ENCODE measurements at regions of chr4 and their contacts with region 1.

Region 1: DNA sequence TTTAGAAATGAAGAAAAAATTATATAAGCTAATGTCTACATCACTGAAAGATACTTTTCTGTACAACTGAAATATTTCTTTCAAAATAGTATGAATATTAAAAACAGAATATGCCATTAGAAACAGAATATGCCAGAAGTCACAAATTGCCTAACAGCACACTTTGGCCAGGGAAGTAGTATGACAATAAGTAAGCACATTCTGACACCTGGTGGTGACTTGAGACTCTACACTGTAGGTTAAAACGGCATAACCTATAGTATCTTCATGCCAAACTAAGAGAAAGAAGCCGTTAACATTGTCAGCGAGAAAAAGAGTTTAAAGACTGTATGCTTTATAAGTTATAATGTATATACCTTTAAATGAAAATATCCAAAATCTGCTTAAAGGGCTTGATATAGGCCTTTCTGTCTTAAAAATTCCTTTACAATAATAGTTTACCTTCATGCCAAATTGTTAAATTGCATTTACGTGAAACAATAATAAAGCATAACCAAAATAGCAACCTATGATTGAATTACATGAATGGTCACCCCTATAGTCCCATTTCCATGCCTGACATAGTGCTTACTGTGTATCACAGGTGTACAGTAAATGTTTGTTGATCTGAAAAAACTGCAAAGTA is 32.8 kb downstream of the FAM13A start:
- DNase-seq: peak; percentile 75
- ATAC-seq: peak; percentile 73
- H3K4me3 ChIP-seq: no peak overlapping the region
- H3K4me3 Mint-ChIP-seq: no peak overlapping the region
- H3K27ac ChIP-seq: no peak overlapping the region
- H3K27ac Mint-ChIP-seq: no peak overlapping the region
- H3K4me1 ChIP-seq: no peaks in the 10 kb centered on the region
- H3K4me1 Mint-ChIP-seq: no peaks in the 10 kb centered on the region
- H3K27me3 ChIP-seq: no peaks in the 10 kb centered on the region
- H3K27me3 Mint-ChIP-seq: peaks cover 3% of the 10 kb centered on the region
- CTCF ChIP-seq: peak; percentile 90

Region 2: DNA sequence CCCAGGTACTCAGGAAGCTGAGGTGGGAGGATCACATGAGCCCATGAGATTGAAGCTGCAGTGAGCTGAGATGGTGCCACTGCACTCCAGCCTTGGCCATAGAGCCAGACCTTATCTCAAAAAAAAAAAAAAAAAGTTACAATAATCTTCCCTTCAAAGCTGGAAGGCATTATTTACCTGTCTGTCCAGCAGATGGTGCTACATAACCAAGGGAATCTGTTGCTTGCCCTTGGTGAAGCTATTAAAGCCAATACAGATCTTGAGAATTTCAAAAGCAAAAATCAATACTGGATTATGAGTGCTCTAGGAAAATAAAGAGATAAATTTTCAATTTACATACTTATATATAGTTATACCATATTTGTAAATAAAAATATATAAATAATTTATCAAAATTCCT is 990.9 kb before region 1 on chr4:
- CTCF ChIA-PET with region 1: interaction called, 7 read pairs
- POLR2A ChIA-PET with region 1: no interaction called
- intact Hi-C with region 1: loop called (anchors 5 kb)
- DNase-seq: peak; percentile 64
- ATAC-seq: peak; percentile 43
- H3K4me3 ChIP-seq: no peak overlapping the region
- H3K4me3 Mint-ChIP-seq: no peak overlapping the region
- H3K27ac ChIP-seq: no peak overlapping the region
- H3K27ac Mint-ChIP-seq: no peak overlapping the region
- H3K4me1 ChIP-seq: no peaks in the 10 kb centered on the region
- H3K4me1 Mint-ChIP-seq: no peaks in the 10 kb centered on the region
- H3K27me3 ChIP-seq: no peaks in the 10 kb centered on the region
- H3K27me3 Mint-ChIP-seq: no peaks in the 10 kb centered on the region
- CTCF ChIP-seq: peak; percentile 71

Region 3: DNA sequence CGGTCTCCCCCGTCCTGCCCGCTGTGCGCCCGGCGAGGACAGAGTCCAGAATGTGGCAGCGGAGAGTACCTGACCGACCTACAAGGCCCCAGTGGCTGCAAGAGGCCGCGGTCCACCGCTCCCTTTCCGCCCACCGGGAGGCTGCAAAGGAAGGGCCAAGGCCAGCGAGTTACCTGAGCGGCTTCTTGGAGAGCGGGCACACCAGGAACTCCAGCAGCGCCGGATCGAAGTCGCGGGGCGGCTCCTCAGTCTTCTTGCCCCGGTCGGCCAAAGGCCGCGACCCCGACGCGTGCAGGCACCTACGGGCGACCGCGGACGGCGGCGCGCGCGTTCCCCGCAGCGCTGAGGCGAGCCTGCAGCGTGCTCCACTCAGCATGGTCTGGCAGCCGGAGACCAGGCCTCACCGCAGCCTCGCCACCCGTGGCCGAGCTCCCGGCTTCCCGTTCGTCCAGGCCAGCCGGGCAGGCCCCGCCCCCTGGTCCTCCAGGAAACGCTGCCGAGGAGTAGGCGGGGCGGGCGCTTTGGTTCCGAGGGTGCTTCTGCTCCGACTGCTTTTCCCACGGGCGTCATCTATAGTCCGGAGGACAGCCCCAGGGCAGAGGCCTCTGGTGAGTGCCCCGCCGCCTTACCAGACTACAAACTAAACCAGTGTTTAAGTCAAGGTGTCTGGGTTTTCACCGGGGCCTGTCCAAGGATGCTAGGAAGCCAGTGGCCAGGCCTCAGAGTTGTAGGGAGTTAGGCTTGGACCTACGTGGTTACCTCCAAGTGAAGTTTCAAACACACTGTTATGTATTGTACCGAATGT is 500.6 kb before region 1 on chr4 and contains the start of gene PYURF:
- CTCF ChIA-PET with region 1: interaction called, 54 read pairs
- POLR2A ChIA-PET with region 1: no interaction called
- intact Hi-C with region 1: loop called (anchors 1 kb)
- DNase-seq: peak; percentile 82
- ATAC-seq: peak; percentile 92
- H3K4me3 ChIP-seq: peak within 1 kb of the TSS; percentile 66 to 88 (median 68)
- H3K4me3 Mint-ChIP-seq: peak within 1 kb of the TSS; percentile 90
- H3K27ac ChIP-seq: peak within 1 kb of the TSS; percentile 28 to 70
- H3K27ac Mint-ChIP-seq: peak within 1 kb of the TSS; percentile 87
- H3K4me1 ChIP-seq: peaks cover 12 to 18% of the 10 kb centered on the region in 2 donors
- H3K4me1 Mint-ChIP-seq: peaks cover 20% of the 10 kb centered on the region
- H3K27me3 ChIP-seq: no peaks in the 10 kb centered on the region
- H3K27me3 Mint-ChIP-seq: no peaks in the 10 kb centered on the region
- CTCF ChIP-seq: no peak
- total RNA-seq, gene PYURF: 38.1 and 40.5 TPM in 2 replicates

Region 4: DNA sequence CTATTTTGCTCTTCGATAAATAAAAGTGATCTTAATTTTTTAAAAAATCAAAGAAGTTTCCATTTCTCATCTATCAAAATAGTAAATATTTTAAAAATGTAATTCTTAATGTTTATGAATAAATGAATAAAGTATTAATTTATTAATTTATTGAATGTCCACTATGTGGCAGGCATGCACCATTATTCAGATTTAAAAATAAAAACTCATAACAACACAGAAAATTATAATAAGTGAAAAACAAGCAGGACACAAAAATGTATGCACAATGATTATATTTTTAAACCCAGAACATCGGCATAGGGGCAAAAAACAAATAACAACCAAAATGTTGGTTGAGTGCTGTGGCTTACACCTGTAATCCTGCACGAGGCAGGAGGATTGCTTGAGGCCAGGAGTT is 495.3 kb before region 1 on chr4:
- CTCF ChIA-PET with region 1: interaction called, 54 read pairs
- POLR2A ChIA-PET with region 1: no interaction called
- intact Hi-C with region 1: loop called (anchors 1 kb)
- DNase-seq: no peak
- ATAC-seq: no peak
- H3K4me3 ChIP-seq: no peak overlapping the region
- H3K4me3 Mint-ChIP-seq: no peak overlapping the region
- H3K27ac ChIP-seq: no peak overlapping the region
- H3K27ac Mint-ChIP-seq: no peak overlapping the region
- H3K4me1 ChIP-seq: peaks cover 4 to 8% of the 10 kb centered on the region in 2 donors
- H3K4me1 Mint-ChIP-seq: peaks cover 7% of the 10 kb centered on the region
- H3K27me3 ChIP-seq: no peaks in the 10 kb centered on the region
- H3K27me3 Mint-ChIP-seq: no peaks in the 10 kb centered on the region
- CTCF ChIP-seq: no peak

Region 5: DNA sequence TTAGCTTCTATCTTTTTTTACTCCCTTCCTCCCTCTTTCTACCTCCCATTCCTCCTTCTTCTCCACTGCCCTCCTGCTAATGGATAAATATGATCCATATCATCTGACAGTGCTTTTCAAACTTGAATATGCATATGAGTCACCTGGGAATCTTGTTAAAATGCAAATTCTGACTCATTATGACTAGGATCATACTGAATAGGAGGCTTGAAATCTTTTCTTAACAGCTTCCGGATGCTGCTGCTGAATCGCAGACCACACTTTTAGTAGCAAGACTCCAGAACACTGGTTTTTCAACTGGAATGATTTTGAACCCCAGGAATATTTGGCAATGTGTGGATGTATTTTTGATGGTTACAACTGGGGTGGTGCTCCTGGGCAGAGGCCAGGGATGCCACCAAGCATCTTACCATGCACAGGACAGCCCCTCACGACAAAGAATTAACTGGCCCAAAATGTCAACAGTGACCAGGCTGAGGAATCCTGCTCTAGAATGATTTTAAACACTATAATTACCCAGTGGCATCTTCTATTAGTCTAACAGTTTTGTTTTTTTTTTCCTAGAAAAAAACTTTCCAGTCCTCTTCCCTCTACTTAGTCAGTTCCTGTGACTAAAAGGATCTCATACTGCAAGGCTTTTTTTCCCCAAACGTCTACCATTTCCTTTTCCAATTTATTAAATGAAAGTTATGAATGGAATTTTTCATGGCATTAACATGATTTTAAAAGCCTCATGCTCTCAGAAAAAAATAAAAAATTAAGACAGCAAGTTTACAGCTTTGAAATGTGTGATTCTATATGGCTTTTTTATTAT is 490.0 kb before region 1 on chr4:
- CTCF ChIA-PET with region 1: interaction called, 89 read pairs
- POLR2A ChIA-PET with region 1: no interaction called
- intact Hi-C with region 1: loop called (anchors 1 kb)
- DNase-seq: no peak
- ATAC-seq: no peak
- H3K4me3 ChIP-seq: no peak overlapping the region
- H3K4me3 Mint-ChIP-seq: no peak overlapping the region
- H3K27ac ChIP-seq: no peak overlapping the region
- H3K27ac Mint-ChIP-seq: no peak overlapping the region
- H3K4me1 ChIP-seq: peaks cover 0 to under 1% of the 10 kb centered on the region in 2 donors
- H3K4me1 Mint-ChIP-seq: no peaks in the 10 kb centered on the region
- H3K27me3 ChIP-seq: no peaks in the 10 kb centered on the region
- H3K27me3 Mint-ChIP-seq: peaks cover 7% of the 10 kb centered on the region
- CTCF ChIP-seq: no peak

Region 6: DNA sequence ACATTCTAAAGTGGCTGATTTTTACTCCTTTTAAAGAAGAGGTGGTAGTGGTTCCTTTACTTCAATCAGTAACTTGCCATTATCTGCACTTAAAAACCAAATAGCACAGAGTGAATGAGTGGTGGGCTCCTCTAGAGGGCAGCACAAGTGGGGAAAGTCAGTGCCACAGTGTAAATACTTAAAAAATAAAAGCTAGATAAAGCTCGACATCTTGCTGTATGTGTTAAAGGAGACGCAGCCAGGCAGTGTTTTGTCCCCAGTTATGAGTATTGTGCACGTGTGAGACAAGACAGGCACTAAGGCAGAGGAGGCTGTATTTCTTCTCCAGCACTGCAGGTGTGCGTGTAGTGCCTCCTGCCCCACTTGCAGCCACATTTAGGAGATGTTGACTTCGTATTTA is 351.2 kb before region 1 on chr4:
- CTCF ChIA-PET with region 1: interaction called, 10 read pairs
- POLR2A ChIA-PET with region 1: no interaction called
- intact Hi-C with region 1: loop called (anchors 5 kb)
- DNase-seq: peak; percentile 5
- ATAC-seq: no peak
- H3K4me3 ChIP-seq: no peak overlapping the region
- H3K4me3 Mint-ChIP-seq: no peak overlapping the region
- H3K27ac ChIP-seq: no peak overlapping the region
- H3K27ac Mint-ChIP-seq: no peak overlapping the region
- H3K4me1 ChIP-seq: no peaks in the 10 kb centered on the region
- H3K4me1 Mint-ChIP-seq: no peaks in the 10 kb centered on the region
- H3K27me3 ChIP-seq: no peaks in the 10 kb centered on the region
- H3K27me3 Mint-ChIP-seq: no peaks in the 10 kb centered on the region
- CTCF ChIP-seq: peak; percentile 35

Region 7: DNA sequence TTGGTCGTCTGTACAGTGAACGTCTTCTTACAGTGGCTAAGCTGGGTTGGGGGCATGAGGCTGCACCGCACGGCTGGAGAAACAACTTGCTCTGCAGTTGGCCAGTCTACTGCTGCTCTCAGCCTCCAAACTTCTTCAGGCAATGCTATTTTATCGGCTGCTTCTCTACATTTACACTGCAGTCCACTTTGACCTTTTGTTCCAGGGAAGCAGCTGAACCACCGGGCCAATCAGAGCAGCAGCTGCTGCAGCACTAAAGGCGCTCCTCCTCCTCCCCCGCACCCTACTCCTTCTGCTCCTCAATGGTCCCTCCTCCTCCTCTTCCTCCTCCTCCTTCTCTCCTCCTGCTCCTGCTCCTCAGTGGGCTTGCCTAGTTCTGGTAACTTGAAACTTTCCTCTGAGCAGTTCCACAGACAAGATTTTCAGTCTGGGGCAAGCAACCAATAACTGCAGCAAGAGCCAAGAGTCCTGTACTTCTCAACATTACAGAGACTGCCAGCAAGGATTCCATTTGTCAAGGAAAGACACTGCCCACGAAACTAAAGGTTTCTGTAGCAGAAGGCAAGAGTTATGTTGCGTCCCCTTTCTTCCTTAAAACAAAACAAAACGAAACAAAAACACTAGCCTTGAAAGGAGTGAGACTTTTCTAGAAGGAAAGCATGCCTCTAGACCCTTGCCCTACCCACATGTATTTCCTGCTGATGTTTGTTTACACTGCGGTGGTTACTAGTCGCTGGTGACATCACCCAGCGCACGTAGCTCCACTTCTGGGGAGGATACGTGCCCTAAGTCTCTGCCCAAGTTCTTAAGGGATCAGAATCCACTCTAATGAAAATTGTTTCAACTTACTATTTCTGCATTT is 200.9 kb before region 1 on chr4:
- CTCF ChIA-PET with region 1: interaction called, 148 read pairs
- POLR2A ChIA-PET with region 1: no interaction called
- intact Hi-C with region 1: loop called (anchors 1 kb)
- DNase-seq: peak; percentile 74
- ATAC-seq: peak; percentile 81
- H3K4me3 ChIP-seq: peak overlapping the region; percentile 28 to 81 (median 50)
- H3K4me3 Mint-ChIP-seq: peak overlapping the region; percentile 95
- H3K27ac ChIP-seq: peak overlapping the region; percentile 1 to 39
- H3K27ac Mint-ChIP-seq: peak overlapping the region; percentile 87
- H3K4me1 ChIP-seq: peaks cover 4 to 7% of the 10 kb centered on the region in 2 donors
- H3K4me1 Mint-ChIP-seq: peaks cover 13% of the 10 kb centered on the region
- H3K27me3 ChIP-seq: peaks cover 0 to 2% (median 0%) of the 10 kb centered on the region in 4 experiments
- H3K27me3 Mint-ChIP-seq: peaks cover under 1% of the 10 kb centered on the region
- CTCF ChIP-seq: no peak